CD8-positive, alpha-beta T cell (primary cell): ENCODE measurements at regions of chr10 and their contacts with region 1.

Region 1: GRCh38 chr10:87817609-87818504 is at the start of gene ATAD1:
- DNase-seq: peak; percentile 79 to 96 (median 88)
- ATAC-seq: peak; percentile 84
- H3K4me3 ChIP-seq: peak within 1 kb of the TSS; percentile 83 to 87
- H3K4me3 Mint-ChIP-seq: peak within 1 kb of the TSS; percentile 94
- H3K27ac ChIP-seq: peak within 1 kb of the TSS; percentile 89 to 95
- H3K27ac Mint-ChIP-seq: peak within 1 kb of the TSS; percentile 100
- H3K4me1 ChIP-seq: peaks cover 26% of the 10 kb centered on the region
- H3K4me1 Mint-ChIP-seq: peaks cover 45% of the 10 kb centered on the region
- H3K27me3 ChIP-seq: no peaks in the 10 kb centered on the region
- H3K27me3 Mint-ChIP-seq: no peaks in the 10 kb centered on the region
- CTCF ChIP-seq: peak; percentile 20
- total RNA-seq, gene ATAD1: 36.9 to 39.0 TPM

Region 2: DNA sequence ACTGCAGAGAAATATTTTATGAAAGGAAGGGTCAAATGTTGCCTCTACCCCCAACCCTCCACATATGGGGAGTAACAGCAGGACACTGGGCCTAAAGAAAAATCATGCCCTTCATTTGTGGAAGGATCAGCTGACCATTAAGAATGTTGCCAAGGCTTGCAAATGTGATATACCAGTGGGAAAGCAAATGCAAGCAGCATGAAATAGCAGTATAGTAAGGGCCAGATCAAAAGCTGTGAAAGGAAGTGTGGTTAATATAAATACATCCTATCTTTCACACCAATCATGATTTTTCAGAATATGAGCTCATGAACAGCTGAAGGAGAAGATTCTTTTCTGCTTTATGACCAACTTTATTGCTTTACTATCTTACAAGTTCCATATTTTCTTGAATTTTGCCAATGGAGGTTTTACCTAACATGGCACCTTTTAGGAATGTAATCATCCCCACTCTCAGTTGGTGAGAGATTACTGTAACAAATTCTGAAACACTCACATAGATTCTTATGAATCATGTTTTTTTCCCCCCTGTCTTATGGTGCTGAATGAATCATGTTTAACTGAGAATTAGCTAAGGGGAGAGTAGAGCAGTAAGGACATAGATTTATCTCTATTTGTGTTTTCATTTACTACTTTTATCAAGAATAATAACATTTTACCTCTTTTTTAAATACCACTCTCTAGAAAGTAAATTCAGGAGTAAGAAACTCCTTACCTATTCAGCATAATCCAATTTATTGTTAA is 12.3 kb after region 1 on chr10:
- CTCF ChIA-PET with region 1: interaction called, 8 read pairs
- POLR2A ChIA-PET with region 1: interaction called, 14 read pairs
- intact Hi-C with region 1: no loop called
- DNase-seq: no peak
- ATAC-seq: no peak
- H3K4me3 ChIP-seq: no peak overlapping the region
- H3K4me3 Mint-ChIP-seq: no peak overlapping the region
- H3K27ac ChIP-seq: peak overlapping the region in 1 of 2 experiments; percentile 27
- H3K27ac Mint-ChIP-seq: no peak overlapping the region
- H3K4me1 ChIP-seq: no peaks in the 10 kb centered on the region
- H3K4me1 Mint-ChIP-seq: peaks cover 23% of the 10 kb centered on the region
- H3K27me3 ChIP-seq: no peaks in the 10 kb centered on the region
- H3K27me3 Mint-ChIP-seq: no peaks in the 10 kb centered on the region
- CTCF ChIP-seq: no peak

Region 3: GRCh38 chr10:88582806-88583583 is 765.1 kb after region 1 on chr10 and contains the start of gene RNLS:
- CTCF ChIA-PET with region 1: interaction called, 5 read pairs
- POLR2A ChIA-PET with region 1: no interaction called
- intact Hi-C with region 1: loop called in 1 of 2 experiments (anchors 1 kb)
- DNase-seq: peak; percentile 21 to 84 (median 65)
- ATAC-seq: peak; percentile 83
- H3K4me3 ChIP-seq: peak within 1 kb of the TSS; percentile 83
- H3K4me3 Mint-ChIP-seq: peak within 1 kb of the TSS; percentile 91
- H3K27ac ChIP-seq: peak within 1 kb of the TSS; percentile 72 to 83
- H3K27ac Mint-ChIP-seq: peak within 1 kb of the TSS; percentile 92
- H3K4me1 ChIP-seq: peaks cover 7% of the 10 kb centered on the region
- H3K4me1 Mint-ChIP-seq: peaks cover 11% of the 10 kb centered on the region
- H3K27me3 ChIP-seq: no peaks in the 10 kb centered on the region
- H3K27me3 Mint-ChIP-seq: peaks cover 3% of the 10 kb centered on the region
- CTCF ChIP-seq: peak; percentile 61
- total RNA-seq, gene RNLS: 1.6 to 1.7 TPM

Region 4: GRCh38 chr10:89251409-89252224 is 1433.8 kb after region 1 on chr10 and contains the start of gene LIPA:
- CTCF ChIA-PET with region 1: no interaction called
- POLR2A ChIA-PET with region 1: no interaction called
- intact Hi-C with region 1: loop called in 1 of 2 experiments (anchors 5 kb)
- DNase-seq: peak; percentile 93 to 99 (median 96)
- ATAC-seq: peak; percentile 96
- H3K4me3 ChIP-seq: peak within 1 kb of the TSS; percentile 82 to 84
- H3K4me3 Mint-ChIP-seq: peak within 1 kb of the TSS; percentile 90
- H3K27ac ChIP-seq: peak within 1 kb of the TSS; percentile 63 to 65
- H3K27ac Mint-ChIP-seq: peak within 1 kb of the TSS; percentile 88
- H3K4me1 ChIP-seq: peaks cover 12% of the 10 kb centered on the region
- H3K4me1 Mint-ChIP-seq: peaks cover 23% of the 10 kb centered on the region
- H3K27me3 ChIP-seq: no peaks in the 10 kb centered on the region
- H3K27me3 Mint-ChIP-seq: peaks cover 2% of the 10 kb centered on the region
- CTCF ChIP-seq: no peak
- total RNA-seq, gene LIPA: 9.7 to 12.1 TPM